ENCODE measurements at regions of chr16 and their contacts with region 1.

Region 1: GRCh38 chr16:19179546-19180490 is 11.8 kb downstream of the SYT17 start:
- DNase-seq: peak; percentile 64 to 95
- H3K4me3 ChIP-seq: no peak overlapping the region
- CTCF ChIP-seq: no peak
- POLR2A ChIP-seq: no peak

Region 2: GRCh38 chr16:19094541-19095365 is 85.1 kb before region 1 on chr16:
- intact Hi-C with region 1: loop called (anchors 5 kb)
- DNase-seq: peak in 1 of 2 donors; percentile 23
- H3K4me3 ChIP-seq: no peak overlapping the region
- CTCF ChIP-seq: no peak
- POLR2A ChIP-seq: no peak

Measured in lower leg skin (tissue), 4 donors.